Activated CD8-positive, alpha-beta T cell treated with anti-CD3 and anti-CD28 coated beads, Interleukin-2, amount 10 ng/mL, durations not matched to agents 7 days and 5 days (primary cell): ENCODE measurements at regions of chr12 and their contacts with region 1.

Region 1: DNA sequence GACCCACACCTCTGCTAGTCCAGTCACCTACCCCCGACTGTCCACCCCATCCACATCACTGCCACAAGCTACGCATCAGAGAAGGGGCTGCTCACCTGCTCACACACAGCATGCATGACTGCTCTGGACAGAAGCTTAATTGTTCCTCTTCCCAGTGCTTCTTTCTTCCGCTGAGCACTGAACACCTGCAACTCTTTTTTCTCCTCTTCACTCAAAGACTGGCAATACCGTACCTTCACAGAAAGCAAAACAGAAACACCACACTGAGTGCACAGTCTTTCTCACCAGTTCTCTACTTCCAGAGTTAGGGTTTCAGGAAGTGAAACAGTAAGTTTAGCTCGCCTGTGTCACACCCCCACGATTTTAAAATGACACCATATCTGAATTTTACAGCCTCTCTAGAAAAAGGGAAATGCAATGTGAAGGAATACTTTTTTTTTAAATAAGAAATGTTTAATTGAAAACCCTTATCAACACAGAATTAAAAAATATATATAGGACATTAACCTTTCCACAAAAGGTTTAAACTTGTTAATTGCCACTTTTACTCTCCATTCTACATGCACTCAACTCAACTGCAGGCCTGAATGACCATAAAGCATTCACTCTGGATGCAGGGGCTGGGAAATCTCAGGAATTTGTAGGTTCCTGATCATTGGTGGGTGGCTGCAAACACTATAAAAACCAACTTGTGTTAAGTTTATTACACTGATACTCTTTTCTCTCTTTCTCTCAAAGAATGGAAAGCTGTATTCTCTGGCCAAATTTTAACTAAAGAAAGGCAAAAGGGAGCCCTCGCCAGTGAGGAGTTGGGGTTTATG is 120.0 kb downstream of the PRICKLE1 start:
- DNase-seq: peak; percentile 22
- ATAC-seq: peak; percentile 74
- H3K4me3 Mint-ChIP-seq: peak overlapping the region; percentile 53
- H3K27ac Mint-ChIP-seq: peak overlapping the region; percentile 21
- H3K4me1 Mint-ChIP-seq: peaks cover 20% of the 10 kb centered on the region
- H3K27me3 Mint-ChIP-seq: peaks cover 12% of the 10 kb centered on the region

Region 2: GRCh38 chr12:42482445-42483237 is 13.1 kb after region 1 on chr12:
- CTCF ChIA-PET with region 1: interaction called, 15 read pairs
- POLR2A ChIA-PET with region 1: no interaction called
- DNase-seq: peak; percentile 53
- ATAC-seq: peak; percentile 89
- H3K4me3 Mint-ChIP-seq: peak overlapping the region; percentile 62
- H3K27ac Mint-ChIP-seq: no peak overlapping the region
- H3K4me1 Mint-ChIP-seq: peaks cover 9% of the 10 kb centered on the region
- H3K27me3 Mint-ChIP-seq: peaks cover 72% of the 10 kb centered on the region

Region 3: GRCh38 chr12:42508913-42509460 is 39.4 kb after region 1 on chr12:
- CTCF ChIA-PET with region 1: no interaction called
- POLR2A ChIA-PET with region 1: no interaction called
- DNase-seq: no peak
- ATAC-seq: no peak
- H3K4me3 Mint-ChIP-seq: no peak overlapping the region
- H3K27ac Mint-ChIP-seq: no peak overlapping the region
- H3K4me1 Mint-ChIP-seq: no peaks in the 10 kb centered on the region
- H3K27me3 Mint-ChIP-seq: peaks cover 3% of the 10 kb centered on the region

Region 4: DNA sequence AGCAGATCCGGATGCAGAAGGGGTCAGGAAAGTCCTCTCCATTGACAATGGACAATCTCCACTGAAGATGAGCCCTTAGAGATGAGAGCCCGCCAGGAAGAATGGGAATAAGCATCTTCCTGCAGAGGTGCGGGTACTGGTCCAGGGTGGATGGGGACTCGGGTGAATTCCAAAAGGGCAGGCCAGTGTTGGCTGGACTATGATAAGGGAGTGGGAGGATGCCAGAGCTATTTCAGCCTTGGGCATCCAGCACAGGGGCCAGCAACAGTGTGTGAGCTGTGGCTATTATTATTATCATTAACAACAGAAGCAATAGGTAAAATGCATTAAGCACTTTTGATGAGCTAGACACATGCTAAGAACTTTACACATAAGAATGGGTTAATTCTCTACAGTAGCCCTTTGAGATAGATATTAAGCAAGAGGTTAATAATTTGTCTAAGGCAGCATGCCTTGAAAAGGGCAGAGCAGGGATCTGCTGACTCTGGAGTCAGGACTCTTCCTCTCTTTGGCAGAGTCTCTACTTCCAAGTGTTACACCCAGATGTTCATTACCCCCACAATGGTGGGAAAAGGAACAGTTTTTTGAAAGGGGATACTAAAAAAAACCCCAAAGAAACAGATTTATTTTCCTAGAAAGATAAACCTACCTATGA is 64.7 kb after region 1 on chr12:
- CTCF ChIA-PET with region 1: no interaction called
- POLR2A ChIA-PET with region 1: no interaction called
- DNase-seq: no peak
- ATAC-seq: no peak
- H3K4me3 Mint-ChIP-seq: no peak overlapping the region
- H3K27ac Mint-ChIP-seq: no peak overlapping the region
- H3K4me1 Mint-ChIP-seq: no peaks in the 10 kb centered on the region
- H3K27me3 Mint-ChIP-seq: peaks cover 6% of the 10 kb centered on the region

Region 5: DNA sequence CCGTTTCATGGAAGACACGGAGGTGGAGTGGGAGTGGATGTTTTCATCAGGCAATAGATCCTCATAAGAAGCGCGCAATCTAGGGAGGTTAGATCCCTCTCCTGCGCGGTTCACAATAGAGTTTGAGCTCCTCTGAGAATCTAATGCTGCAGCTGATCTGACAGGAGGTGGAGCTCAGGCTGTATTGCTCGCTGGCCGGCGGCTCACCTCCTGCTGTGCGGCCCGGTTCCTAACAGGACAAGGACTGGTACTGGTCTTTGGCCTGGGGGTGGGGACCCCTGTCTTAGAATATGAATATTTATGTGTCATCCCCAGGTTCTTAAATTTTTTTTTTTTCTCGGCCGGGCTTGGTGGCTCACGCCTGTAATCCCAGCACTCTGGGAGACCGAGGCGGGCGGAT is 83.3 kb after region 1 on chr12:
- CTCF ChIA-PET with region 1: no interaction called
- POLR2A ChIA-PET with region 1: no interaction called
- DNase-seq: no peak
- ATAC-seq: no peak
- H3K4me3 Mint-ChIP-seq: no peak overlapping the region
- H3K27ac Mint-ChIP-seq: no peak overlapping the region
- H3K4me1 Mint-ChIP-seq: no peaks in the 10 kb centered on the region
- H3K27me3 Mint-ChIP-seq: peaks cover 9% of the 10 kb centered on the region